Right lobe of liver (tissue), 6 donors: ENCODE measurements at regions of chr16 and their contacts with region 1.

Region 1: DNA sequence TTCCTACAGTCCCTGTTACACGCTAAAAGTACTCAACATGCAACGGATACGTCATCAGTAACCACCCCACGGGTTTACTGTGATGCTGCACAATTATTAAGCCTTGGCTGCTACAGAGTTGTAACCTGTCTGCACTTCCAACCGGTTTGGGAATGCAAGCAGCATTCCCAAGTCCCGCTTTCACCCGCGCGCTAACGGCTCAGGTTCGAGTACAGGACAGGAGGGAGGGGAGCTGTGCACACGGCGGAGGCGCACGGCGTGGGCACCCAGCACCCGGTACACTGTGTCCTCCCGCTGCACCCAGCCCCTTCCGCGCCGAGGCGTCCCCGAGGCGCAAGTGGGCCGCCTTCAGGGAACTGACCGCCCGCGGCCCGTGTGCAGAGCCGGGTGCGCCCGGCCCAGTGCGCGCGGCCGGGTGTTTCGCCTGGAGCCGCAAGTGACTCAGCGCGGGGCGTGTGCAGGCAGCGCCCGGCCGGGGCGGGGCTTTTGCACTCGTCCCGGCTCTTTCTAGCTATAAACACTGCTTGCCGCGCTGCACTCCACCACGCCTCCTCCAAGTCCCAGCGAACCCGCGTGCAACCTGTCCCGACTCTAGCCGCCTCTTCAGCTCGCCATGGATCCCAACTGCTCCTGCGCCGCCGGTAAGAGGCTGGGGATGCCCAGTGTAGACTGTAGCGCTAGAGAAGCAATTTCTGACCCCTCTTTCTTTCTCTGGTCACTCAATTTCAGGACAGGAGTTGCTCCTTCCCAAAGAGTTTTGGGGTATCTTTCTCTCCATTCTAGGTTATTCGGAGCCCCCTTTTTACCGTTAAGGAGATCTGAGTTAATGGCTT is at the start of gene MT2A:
- DNase-seq: peak; percentile 97 to 98 (median 97)
- ATAC-seq: peak; percentile 42 to 72 (median 68)
- H3K4me3 ChIP-seq: peak within 1 kb of the TSS; percentile 40 to 84 (median 73)
- H3K27ac ChIP-seq: peak within 1 kb of the TSS; percentile 65 to 95 (median 84)
- H3K4me1 ChIP-seq: peaks cover 0 to 35% (median 14%) of the 10 kb centered on the region in 4 donors
- H3K27me3 ChIP-seq: no peaks in the 10 kb centered on the region
- CTCF ChIP-seq: peak in 1 of 4 donors; percentile 8
- POLR2A ChIP-seq: peak; percentile 98
- total RNA-seq, gene MT2A: 946 to 4,033 (median 2,228) TPM

Region 2: GRCh38 chr16:56691885-56692284 is 83.6 kb after region 1 on chr16:
- intact Hi-C with region 1: loop called in 1 of 2 experiments (anchors 10 kb)
- DNase-seq: no peak
- ATAC-seq: peak in 1 of 4 donors; percentile 14
- H3K4me3 ChIP-seq: no peak overlapping the region
- H3K27ac ChIP-seq: no peak overlapping the region
- H3K4me1 ChIP-seq: no peaks in the 10 kb centered on the region
- H3K27me3 ChIP-seq: no peaks in the 10 kb centered on the region
- CTCF ChIP-seq: no peak
- POLR2A ChIP-seq: no peak